A549 (cell line): ENCODE measurements at regions of chr17 and their contacts with region 1.

Region 1: GRCh38 chr17:40203131-40203530 is 16.0 kb upstream of the WIPF2 start:
- DNase-seq: no peak
- ATAC-seq: no peak
- H3K4me3 ChIP-seq: no peak overlapping the region
- H3K27ac ChIP-seq: no peak overlapping the region
- H3K4me1 ChIP-seq: no peaks in the 10 kb centered on the region
- CTCF ChIP-seq: no peak
- EP300 ChIP-seq: no peak
- POLR2A ChIP-seq: no peak
- RAD21 ChIP-seq: no peak

Region 2: DNA sequence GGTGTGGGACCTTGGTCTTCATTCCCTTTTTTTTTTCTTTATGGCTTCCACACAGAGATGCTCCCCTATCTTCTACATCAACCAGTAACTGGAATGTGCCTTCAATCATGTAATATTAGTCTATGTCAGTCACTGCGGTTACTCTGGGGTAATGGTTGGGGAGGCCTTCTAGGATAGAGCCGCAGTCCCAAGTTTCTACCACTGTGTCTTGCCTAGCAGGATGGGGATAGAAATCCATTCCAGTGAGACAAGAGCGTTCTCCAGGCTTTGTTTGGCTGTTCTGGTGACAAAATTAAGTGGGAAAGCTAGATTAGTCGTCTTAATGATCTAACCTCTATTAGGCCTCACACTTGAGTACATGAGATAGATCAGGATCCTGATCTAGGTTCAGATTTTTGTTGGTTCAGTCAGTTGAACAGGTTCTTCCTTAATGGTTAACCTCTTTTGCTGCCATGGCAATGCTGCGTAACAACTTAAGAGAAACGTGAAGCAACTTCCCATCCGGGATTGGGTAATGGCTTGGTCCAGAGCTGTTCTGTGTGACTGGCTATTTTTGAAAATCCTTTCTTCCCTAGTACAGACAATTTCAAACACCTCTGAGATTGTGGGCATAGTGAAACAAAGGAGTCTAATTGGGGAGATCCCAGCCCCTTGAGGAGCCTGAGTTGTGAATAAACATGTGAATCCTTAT is 72.6 kb before region 1 on chr17:
- CTCF ChIA-PET with region 1: no interaction called
- POLR2A ChIA-PET with region 1: no interaction called
- DNase-seq: no peak
- ATAC-seq: peak; percentile 37 to 52; a peak in 3 of 6 replicates
- H3K4me3 ChIP-seq: no peak overlapping the region
- H3K27ac ChIP-seq: no peak overlapping the region
- H3K4me1 ChIP-seq: peaks cover 3% of the 10 kb centered on the region; the same call in 1 of the 3 replicates
- CTCF ChIP-seq: no peak
- EP300 ChIP-seq: no peak
- POLR2A ChIP-seq: no peak
- RAD21 ChIP-seq: no peak

Region 3: GRCh38 chr17:40242774-40243173 is 39.6 kb after region 1 on chr17:
- CTCF ChIA-PET with region 1: interaction called, 11 read pairs
- POLR2A ChIA-PET with region 1: no interaction called
- DNase-seq: no peak
- ATAC-seq: no peak
- H3K4me3 ChIP-seq: no peak overlapping the region
- H3K27ac ChIP-seq: no peak overlapping the region
- H3K4me1 ChIP-seq: no peaks in the 10 kb centered on the region
- CTCF ChIP-seq: no peak
- EP300 ChIP-seq: no peak
- POLR2A ChIP-seq: no peak
- RAD21 ChIP-seq: no peak

Region 4: GRCh38 chr17:40349920-40350909 is 147.1 kb after region 1 on chr17:
- CTCF ChIA-PET with region 1: interaction called, 21 read pairs
- POLR2A ChIA-PET with region 1: no interaction called
- DNase-seq: no peak
- ATAC-seq: no peak
- H3K4me3 ChIP-seq: no peak overlapping the region
- H3K27ac ChIP-seq: peak overlapping the region in 1 of 2 experiments; percentile 76; a peak in 1 of 6 replicates
- H3K4me1 ChIP-seq: peaks cover 92% of the 10 kb centered on the region
- CTCF ChIP-seq: no peak
- EP300 ChIP-seq: no peak
- POLR2A ChIP-seq: no peak
- RAD21 ChIP-seq: no peak

Region 5: DNA sequence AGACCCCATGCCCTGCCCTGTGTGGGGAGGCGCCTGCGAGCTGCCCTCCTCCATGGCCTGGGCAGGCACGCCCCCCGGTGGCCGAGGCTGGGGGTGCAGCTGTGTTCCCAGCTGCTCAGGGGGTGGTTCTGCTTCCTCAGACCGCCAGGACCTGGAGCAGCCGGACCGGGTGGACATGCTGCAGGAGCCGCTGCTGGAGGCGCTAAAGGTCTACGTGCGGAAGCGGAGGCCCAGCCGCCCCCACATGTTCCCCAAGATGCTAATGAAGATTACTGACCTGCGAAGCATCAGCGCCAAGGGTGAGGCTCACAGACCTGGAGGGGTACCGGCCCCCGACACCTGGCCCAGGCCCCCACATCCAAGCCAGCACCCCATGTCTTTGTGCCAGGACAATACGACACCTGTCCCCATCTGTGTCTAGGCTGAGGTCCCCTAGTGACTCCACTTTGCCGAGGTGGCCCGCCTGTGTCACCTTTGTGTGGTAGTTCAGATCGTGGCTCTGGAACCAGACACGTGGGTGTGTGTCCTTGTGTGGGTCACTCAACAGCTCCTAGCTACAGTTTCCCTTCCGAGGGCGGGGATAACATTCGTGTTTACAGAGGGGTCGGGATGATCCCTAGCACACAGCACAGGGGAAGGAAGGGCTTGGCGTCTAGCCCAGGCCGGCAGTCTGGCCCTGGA is 152.1 kb after region 1 on chr17:
- CTCF ChIA-PET with region 1: interaction called, 21 read pairs
- POLR2A ChIA-PET with region 1: no interaction called
- DNase-seq: peak; percentile 77 to 97
- ATAC-seq: peak; percentile 58 to 84
- H3K4me3 ChIP-seq: no peak overlapping the region
- H3K27ac ChIP-seq: peak overlapping the region in 1 of 2 experiments; percentile 62; a peak in 3 of 6 replicates
- H3K4me1 ChIP-seq: peaks cover 52% of the 10 kb centered on the region
- CTCF ChIP-seq: peak; percentile 98
- EP300 ChIP-seq: no peak
- POLR2A ChIP-seq: no peak
- RAD21 ChIP-seq: peak; percentile 99 to 100

Region 6: DNA sequence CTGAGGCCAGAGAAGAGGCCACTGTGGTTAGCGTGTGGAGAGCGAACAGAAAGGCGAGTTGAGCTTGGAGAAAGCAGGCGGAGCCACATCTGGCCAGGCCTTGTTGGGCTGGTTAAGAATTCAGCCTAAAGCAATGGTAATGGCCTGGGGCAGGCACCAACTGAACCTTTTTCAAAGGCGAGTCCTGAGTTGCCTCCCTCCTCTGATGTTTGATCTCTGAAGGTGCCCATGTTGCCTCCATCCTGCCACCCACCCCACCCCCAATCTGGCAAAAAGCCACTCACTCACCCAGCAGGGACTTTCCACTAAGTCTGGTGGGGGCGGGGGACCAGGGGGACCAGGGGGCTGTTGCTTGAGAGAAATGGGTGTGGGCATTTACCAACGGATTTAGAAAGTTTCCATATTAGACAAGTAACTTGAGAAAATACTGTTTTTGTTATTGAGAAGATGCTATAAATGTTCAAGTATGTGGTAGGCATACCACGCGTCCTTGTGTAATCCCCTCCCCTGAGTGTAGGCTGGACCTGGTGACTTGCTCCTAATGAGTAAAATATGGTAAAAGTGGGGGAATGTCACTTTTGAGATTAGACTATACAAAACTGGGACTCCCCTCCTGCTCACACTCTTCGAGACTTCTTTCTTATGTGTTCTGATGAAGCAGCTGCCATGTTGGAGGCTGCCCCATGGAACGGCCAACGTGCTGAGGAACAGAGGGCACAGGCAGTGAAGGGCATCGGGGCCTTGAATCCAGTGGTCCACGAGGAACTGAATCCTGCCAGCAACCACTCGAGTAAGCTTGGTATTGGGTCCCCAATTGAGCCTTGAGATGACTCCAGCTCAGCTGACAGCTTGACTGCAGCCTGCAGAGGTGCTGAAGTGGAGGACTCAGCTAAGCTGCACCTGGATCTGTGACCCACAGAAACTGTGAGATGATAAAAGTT is 328.2 kb after region 1 on chr17:
- CTCF ChIA-PET with region 1: no interaction called
- POLR2A ChIA-PET with region 1: no interaction called
- DNase-seq: no peak
- ATAC-seq: no peak
- H3K4me3 ChIP-seq: no peak overlapping the region
- H3K27ac ChIP-seq: peak overlapping the region; percentile 95 to 99
- H3K4me1 ChIP-seq: peaks cover 57% of the 10 kb centered on the region
- CTCF ChIP-seq: no peak
- EP300 ChIP-seq: no peak
- POLR2A ChIP-seq: no peak
- RAD21 ChIP-seq: no peak